Activated T-helper 1 cell treated with anti-CD3 and anti-CD28 coated beads, Interleukin-12 subunit alpha, Interleukin-12 subunit beta, Interleukin-2, Interleukin-4 antibody, amounts not matched to agents 30 ng/mL and 10 ng/mL and 1 ng/mL, durations not matched to agents 14 hours and 24 hours and 36 hours (primary cell): ENCODE measurements at regions of chr2 and their contacts with region 1.

Region 1: GRCh38 chr2:8334866-8335325 is 347.0 kb upstream of the ID2 start:
- DNase-seq: no peak
- H3K4me3 Mint-ChIP-seq: no peak overlapping the region
- H3K27ac Mint-ChIP-seq: no peak overlapping the region
- H3K4me1 Mint-ChIP-seq: peaks cover 15% of the 10 kb centered on the region
- H3K27me3 Mint-ChIP-seq: peaks cover 6% of the 10 kb centered on the region

Region 2: DNA sequence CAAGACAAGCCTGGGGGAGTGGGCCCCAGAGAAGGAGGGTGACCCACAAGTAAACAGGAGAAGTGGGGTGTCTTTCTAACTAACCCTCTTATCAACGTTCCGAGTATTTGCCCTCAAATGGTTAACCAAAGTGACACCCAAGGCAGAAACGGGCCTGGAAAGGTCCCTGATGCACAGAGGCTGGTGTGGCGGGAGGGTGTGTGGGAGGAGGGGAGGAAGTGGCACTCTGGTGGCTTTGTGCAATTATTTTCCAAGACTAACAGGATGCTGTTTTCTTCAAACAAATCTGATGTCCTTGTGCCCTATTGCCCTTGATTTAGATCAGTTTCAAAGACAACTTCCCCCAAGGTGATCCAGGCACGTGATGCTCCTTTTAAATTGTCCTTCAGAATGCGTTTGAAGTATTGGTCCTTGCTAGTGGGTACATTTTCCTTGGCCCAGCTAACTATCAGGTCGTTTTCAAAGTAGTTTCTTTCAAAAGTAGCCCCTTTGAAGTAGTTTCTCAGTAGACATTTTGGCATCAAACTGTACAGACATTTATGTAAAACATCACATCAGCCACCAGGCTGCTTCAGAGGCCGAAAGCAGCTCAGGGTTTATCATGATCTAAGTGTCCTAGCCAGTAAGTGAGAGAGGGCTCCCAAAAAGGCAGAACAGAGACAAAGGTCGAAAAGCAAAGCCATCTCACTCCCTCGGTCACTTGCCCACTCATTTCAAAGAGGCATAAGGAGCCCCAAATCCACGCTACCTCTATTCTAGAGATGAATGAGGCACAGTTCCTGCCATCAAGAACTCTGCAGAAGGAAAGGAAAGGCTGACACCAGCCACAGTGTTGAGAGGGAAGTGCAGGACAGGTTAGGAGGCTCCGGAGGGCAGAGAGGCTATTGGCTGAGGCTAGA is 24.1 kb before region 1 on chr2:
- intact Hi-C with region 1: loop called (anchors 1 kb)
- DNase-seq: peak; percentile 51
- H3K4me3 Mint-ChIP-seq: peak overlapping the region; percentile 8
- H3K27ac Mint-ChIP-seq: peak overlapping the region; percentile 83
- H3K4me1 Mint-ChIP-seq: peaks cover 78% of the 10 kb centered on the region
- H3K27me3 Mint-ChIP-seq: peaks cover 2% of the 10 kb centered on the region

Region 3: DNA sequence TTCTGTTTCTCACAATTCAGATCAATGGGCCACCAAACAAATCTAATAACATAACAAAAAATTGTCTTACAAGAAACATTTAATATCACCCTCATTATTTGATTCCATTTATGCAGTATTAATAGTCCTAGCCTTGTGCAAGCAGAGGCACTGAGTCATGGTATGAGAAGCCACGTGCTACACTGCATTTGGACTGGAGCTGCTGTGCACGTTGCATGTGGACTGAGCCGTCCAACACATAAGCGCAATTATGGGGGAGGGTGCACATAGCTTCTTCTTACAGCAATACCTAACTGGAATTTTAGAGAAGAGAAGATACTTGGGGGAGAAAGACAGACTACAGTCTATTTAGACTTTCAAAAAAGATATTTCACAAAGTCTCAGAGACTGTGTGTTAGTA is 17.4 kb after region 1 on chr2:
- intact Hi-C with region 1: no loop called
- DNase-seq: no peak
- H3K4me3 Mint-ChIP-seq: no peak overlapping the region
- H3K27ac Mint-ChIP-seq: no peak overlapping the region
- H3K4me1 Mint-ChIP-seq: peaks cover under 1% of the 10 kb centered on the region
- H3K27me3 Mint-ChIP-seq: peaks cover 7% of the 10 kb centered on the region

Region 4: GRCh38 chr2:8378016-8378810 is 43.3 kb after region 1 on chr2:
- intact Hi-C with region 1: loop called (anchors 2 kb)
- DNase-seq: no peak
- H3K4me3 Mint-ChIP-seq: no peak overlapping the region
- H3K27ac Mint-ChIP-seq: peak overlapping the region; percentile 15
- H3K4me1 Mint-ChIP-seq: peaks cover 21% of the 10 kb centered on the region
- H3K27me3 Mint-ChIP-seq: peaks cover 5% of the 10 kb centered on the region

Region 5: GRCh38 chr2:8488001-8488738 is 153.3 kb after region 1 on chr2:
- intact Hi-C with region 1: loop called (anchors 10 kb)
- DNase-seq: peak; percentile 57
- H3K4me3 Mint-ChIP-seq: peak overlapping the region; percentile 75
- H3K27ac Mint-ChIP-seq: peak overlapping the region; percentile 86
- H3K4me1 Mint-ChIP-seq: peaks cover 61% of the 10 kb centered on the region
- H3K27me3 Mint-ChIP-seq: no peaks in the 10 kb centered on the region

Region 6: GRCh38 chr2:8790739-8791162 is 455.9 kb after region 1 on chr2:
- intact Hi-C with region 1: no loop called
- DNase-seq: no peak
- H3K4me3 Mint-ChIP-seq: no peak overlapping the region
- H3K27ac Mint-ChIP-seq: no peak overlapping the region
- H3K4me1 Mint-ChIP-seq: no peaks in the 10 kb centered on the region
- H3K27me3 Mint-ChIP-seq: no peaks in the 10 kb centered on the region